ENCODE measurements at regions of chr1 and their contacts with region 1.

Region 1: DNA sequence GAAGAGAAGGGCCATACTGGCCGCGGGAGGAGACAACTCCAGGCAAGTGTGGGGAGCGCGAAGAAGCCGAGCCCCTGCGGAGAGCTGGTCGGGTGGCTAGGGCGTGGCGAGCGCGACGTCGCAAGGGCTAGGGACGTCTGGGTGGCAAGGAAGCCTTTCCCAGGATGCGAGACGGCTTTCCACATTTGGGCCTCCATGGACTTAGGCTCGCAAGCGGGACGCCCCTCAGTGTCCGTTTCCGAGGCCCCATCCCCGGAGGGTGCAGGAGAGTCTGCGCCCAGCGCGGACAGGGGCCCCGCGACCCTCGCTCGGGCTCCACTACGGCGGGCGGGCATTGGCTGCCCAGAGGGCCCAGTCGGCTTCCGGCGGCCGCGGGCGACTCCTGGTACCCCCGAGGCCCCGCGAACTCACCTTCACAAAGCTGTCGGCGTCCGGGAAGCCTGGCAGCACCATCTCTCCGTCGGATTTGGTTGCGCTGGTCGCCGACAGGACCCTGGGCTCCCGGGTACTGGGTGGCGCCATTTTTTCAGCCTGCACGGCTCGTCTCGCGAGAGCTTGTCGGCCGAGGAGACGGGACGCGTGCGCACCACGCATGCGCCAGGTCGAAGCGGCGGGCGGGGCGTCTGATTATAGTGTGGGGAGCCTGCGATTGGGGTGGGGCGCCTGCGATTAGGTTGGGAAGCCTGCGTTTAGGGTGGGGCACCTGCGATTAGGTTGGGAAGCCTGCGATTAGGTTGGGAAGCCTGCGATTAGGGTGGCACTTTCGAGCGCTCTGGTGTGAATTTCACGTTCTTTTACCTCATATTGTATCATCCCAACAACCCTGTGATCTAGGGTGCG is at the start of gene EXOSC10:
- DNase-seq: peak; percentile 96
- H3K4me3 Mint-ChIP-seq: peak within 1 kb of the TSS; percentile 92
- H3K27ac Mint-ChIP-seq: peak within 1 kb of the TSS; percentile 91
- H3K4me1 Mint-ChIP-seq: peaks cover 24% of the 10 kb centered on the region
- H3K27me3 Mint-ChIP-seq: no peaks in the 10 kb centered on the region
- total RNA-seq, gene EXOSC10: 65.8 to 67.6 TPM

Region 2: GRCh38 chr1:10989095-10989494 is 110.4 kb before region 1 on chr1:
- CTCF ChIA-PET with region 1: no interaction called
- POLR2A ChIA-PET with region 1: no interaction called
- DNase-seq: no peak
- H3K4me3 Mint-ChIP-seq: no peak overlapping the region
- H3K27ac Mint-ChIP-seq: no peak overlapping the region
- H3K4me1 Mint-ChIP-seq: peaks cover 6% of the 10 kb centered on the region
- H3K27me3 Mint-ChIP-seq: peaks cover 3% of the 10 kb centered on the region

Region 3: DNA sequence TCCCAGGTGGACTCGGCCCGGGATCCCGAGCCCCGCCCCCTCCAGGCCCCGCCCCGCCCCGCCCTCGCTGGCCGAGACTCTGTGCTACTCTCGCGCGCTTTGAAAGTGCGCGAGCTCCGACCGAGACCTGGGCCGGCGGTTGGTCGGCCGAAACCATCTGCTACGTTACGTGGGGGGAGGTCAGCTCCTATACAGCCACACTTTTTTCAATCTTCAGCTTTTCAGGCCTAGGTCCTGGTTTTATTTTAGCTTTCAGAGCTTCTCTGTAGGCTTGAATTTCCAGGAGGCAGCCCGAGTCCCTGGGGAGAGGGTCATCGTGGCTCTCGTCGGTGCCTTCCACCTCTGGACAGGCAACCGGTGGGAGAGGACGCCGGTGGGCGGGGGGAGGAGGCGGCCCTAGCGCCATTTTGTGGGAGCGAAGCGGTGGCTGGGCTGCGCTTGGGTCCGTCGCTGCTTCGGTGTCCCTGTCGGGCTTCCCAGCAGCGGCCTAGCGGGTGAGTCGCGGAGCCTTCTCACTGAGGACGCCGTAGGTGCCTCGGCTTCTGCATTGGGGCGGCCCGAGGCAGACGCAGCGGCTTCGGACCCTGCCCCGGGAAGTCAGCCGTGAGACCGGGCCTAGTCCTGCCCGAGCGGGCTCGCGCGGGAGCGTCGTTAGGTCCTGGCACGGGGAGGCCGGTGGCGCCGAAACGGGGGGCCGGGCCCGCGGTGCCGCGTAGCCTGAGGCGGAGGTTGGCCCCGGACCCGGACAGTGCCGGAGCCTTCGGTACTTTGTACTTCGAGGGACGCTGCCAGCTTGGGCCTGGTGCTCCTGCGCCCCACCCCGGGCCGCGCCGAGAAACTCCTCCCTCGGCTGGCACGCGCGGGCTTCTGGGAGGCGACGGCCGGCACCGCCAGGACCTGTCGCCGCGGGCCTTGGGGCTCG is 87.0 kb before region 1 on chr1 and contains the start of gene TARDBP:
- CTCF ChIA-PET with region 1: interaction called, 4 read pairs
- POLR2A ChIA-PET with region 1: interaction called, 36 read pairs
- DNase-seq: peak; percentile 91
- H3K4me3 Mint-ChIP-seq: peak within 1 kb of the TSS; percentile 92
- H3K27ac Mint-ChIP-seq: peak within 1 kb of the TSS; percentile 85
- H3K4me1 Mint-ChIP-seq: peaks cover 30% of the 10 kb centered on the region
- H3K27me3 Mint-ChIP-seq: no peaks in the 10 kb centered on the region
- total RNA-seq, gene TARDBP: 159 to 174 TPM

Region 4: GRCh38 chr1:11078631-11079030 is 20.9 kb before region 1 on chr1:
- CTCF ChIA-PET with region 1: interaction called, 3 read pairs
- POLR2A ChIA-PET with region 1: interaction called, 16 read pairs
- DNase-seq: no peak
- H3K4me3 Mint-ChIP-seq: no peak overlapping the region
- H3K27ac Mint-ChIP-seq: no peak overlapping the region
- H3K4me1 Mint-ChIP-seq: no peaks in the 10 kb centered on the region
- H3K27me3 Mint-ChIP-seq: no peaks in the 10 kb centered on the region

Measured in activated CD4-positive, alpha-beta memory T cell treated with anti-CD3 and anti-CD28 coated beads, Interleukin-2, amount 10 ng/mL, durations not matched to agents 7 days and 5 days (primary cell).